Activated CD4-positive, alpha-beta memory T cell treated with anti-CD3 and anti-CD28 coated beads for 36 hours (primary cell): ENCODE measurements at regions of chr11 and their contacts with region 1.

Region 1: DNA sequence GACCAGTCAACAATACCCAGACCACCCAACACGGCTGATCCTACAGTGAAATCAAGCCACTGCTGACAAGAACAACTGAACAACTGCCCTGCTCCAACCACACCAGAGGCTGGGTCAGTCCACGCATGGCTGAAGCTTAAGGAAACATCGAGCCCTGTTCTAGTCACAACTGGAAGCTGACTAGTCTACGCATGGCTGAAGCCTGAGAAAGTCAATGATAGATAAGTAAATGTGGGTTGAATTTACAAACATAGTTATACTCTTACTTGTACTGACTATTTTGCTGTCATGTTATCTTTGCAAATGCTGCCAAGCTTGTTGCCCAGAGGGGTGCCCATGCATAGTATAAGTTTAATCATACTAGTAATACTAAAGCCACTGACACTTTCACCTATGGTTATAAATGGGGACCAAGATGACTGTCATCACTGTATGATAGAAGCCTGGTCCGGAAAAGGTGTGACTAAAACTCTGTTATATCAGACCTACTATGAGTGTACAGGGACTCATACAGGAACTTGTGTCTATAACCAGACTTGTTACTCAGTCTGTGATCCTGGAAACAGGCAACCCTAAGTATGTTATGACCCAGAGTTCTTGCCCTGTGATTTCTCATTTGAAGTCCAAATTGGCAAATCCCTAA is 43.4 kb upstream of the GLYAT start:
- DNase-seq: peak; percentile 27
- H3K4me3 Mint-ChIP-seq: no peak overlapping the region
- H3K27ac Mint-ChIP-seq: no peak overlapping the region
- H3K4me1 Mint-ChIP-seq: peaks cover 6% of the 10 kb centered on the region
- H3K27me3 Mint-ChIP-seq: peaks cover 21% of the 10 kb centered on the region

Region 2: DNA sequence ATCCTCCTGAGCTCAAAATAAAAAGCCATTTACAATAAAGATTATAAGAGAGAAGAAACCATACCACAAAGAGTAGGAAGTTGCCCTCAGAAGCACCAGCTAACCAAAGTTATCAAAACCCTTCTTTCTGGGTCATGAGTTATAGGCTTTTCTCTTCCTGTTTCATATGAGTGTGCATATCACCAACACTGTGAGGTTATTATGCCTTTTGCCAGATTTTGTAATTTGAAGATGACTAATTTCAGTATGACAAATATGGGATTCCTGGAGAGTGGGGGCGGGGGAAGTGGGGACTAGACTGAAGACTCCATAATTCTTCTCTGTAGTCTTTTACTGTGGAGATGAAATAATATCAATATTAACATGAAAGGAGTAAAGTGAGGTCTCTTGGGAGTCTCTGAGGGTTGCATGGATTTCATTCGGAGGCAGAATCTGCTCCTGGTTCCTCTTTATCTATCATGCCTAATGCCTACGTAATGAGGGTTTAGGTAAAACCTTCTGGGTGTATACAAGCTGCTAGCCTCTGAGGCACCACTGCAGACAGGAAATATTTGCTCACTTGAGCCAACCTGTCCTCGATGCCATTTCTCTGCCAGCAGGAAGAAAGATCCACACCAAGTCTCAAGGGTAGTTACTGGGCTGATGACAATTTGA is 201.6 kb before region 1 on chr11:
- CTCF ChIA-PET with region 1: interaction called, 3 read pairs
- POLR2A ChIA-PET with region 1: no interaction called
- intact Hi-C with region 1: loop called (anchors 1 kb)
- DNase-seq: peak; percentile 82
- H3K4me3 Mint-ChIP-seq: peak overlapping the region; percentile 87
- H3K27ac Mint-ChIP-seq: peak overlapping the region; percentile 100
- H3K4me1 Mint-ChIP-seq: peaks cover 46% of the 10 kb centered on the region
- H3K27me3 Mint-ChIP-seq: no peaks in the 10 kb centered on the region

Region 3: DNA sequence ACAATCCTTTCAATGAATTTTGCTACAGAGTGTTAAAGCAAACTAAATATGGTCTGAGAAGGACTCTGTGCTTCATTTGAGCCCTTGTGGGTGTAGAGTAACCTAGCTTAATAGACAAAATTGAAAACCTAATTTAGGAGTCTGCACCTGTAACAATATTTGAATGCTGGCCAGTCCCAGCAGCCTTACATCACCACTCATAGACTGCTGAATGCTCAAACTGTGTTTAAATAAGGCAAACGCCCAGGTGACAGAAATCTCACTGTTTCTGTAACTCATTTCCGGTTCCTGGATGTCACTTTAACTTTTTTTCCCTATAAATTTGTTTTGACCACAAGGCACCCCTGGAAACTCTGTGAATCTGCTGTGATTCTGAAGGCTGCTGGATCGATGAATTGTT is 265.4 kb after region 1 on chr11:
- CTCF ChIA-PET with region 1: no interaction called
- POLR2A ChIA-PET with region 1: no interaction called
- intact Hi-C with region 1: no loop called
- DNase-seq: no peak
- H3K4me3 Mint-ChIP-seq: no peak overlapping the region
- H3K27ac Mint-ChIP-seq: no peak overlapping the region
- H3K4me1 Mint-ChIP-seq: no peaks in the 10 kb centered on the region
- H3K27me3 Mint-ChIP-seq: peaks cover 14% of the 10 kb centered on the region

Region 4: GRCh38 chr11:59152312-59152951 is 377.2 kb after region 1 on chr11:
- CTCF ChIA-PET with region 1: no interaction called
- POLR2A ChIA-PET with region 1: no interaction called
- intact Hi-C with region 1: loop called (anchors 1 kb)
- DNase-seq: peak; percentile 55
- H3K4me3 Mint-ChIP-seq: peak overlapping the region; percentile 53
- H3K27ac Mint-ChIP-seq: peak overlapping the region; percentile 92
- H3K4me1 Mint-ChIP-seq: peaks cover 41% of the 10 kb centered on the region
- H3K27me3 Mint-ChIP-seq: no peaks in the 10 kb centered on the region